ENCODE measurements at regions of chr22 and their contacts with region 1.

Region 1: GRCh38 chr22:19432133-19432851 is at the start of gene MRPL40:
- DNase-seq: peak; percentile 95

Region 2: DNA sequence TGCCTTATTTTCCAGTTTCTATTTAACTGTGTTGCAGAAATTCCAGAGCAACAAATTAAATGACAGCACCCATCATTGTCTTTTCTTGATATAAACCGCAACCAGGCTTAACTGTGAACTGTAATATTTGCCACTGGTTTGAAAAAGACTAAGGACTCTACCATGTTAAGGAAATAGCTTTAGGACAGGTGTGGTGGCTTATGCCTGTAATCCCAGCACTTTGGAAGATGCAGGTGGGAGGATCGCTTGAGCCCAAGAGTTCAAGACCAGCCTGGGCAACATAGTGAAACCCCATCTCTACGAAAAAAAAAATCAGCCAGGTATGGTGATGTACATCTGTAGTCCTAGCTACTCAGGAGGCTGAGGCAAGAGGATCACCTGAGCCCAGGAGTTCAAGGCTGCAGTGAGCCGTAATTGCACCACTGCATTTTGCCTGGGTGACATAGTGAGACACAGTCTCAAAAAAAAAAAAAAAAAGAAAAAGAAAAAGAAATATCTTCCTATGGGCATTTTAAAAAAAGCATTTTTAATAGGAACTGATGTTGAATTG is 29.6 kb before region 1 on chr22:
- CTCF ChIA-PET with region 1: no interaction called
- POLR2A ChIA-PET with region 1: no interaction called
- DNase-seq: no peak

Region 3: DNA sequence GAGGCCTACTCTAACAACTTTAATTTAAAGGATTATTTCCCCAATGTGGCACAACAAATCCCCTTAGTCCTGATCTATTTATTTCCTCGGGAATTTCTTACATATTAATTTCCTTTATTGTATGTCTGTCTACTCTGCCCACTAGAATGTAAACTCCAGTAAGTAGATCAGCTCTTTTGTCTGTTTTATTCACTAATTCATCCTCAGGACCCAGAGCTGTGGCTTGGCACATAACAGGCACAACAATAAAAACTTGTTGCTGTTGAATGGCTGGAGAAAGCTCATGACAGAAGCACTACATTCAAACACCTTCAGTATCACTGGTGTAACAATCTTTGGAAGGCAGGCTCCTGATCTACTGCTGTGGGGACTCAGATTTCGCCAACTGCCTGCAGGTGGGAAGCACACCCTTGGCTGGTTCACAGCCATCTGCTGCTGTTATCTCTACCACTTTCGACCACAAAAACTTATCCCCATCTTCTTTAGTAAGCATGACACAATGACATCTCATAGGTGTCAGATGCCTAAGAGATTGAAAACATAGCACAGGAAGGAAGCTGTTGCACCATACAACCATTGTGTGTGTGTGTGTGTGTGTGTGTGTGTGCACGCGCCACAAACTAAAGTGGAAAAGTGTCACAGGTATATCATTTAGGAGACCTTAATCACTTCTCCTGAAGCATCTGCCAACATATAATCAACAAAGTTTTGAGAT is 12.7 kb before region 1 on chr22:
- CTCF ChIA-PET with region 1: no interaction called
- POLR2A ChIA-PET with region 1: interaction called, 17 read pairs
- DNase-seq: no peak

Region 4: GRCh38 chr22:19447388-19448075 is 15.2 kb after region 1 on chr22 and contains the start of gene C22orf39:
- CTCF ChIA-PET with region 1: interaction called, 4 read pairs
- POLR2A ChIA-PET with region 1: interaction called, 20 read pairs
- DNase-seq: peak; percentile 97

Measured in HEK293T (cell line).